ENCODE measurements at regions of chr11 and their contacts with region 1.

Region 1: DNA sequence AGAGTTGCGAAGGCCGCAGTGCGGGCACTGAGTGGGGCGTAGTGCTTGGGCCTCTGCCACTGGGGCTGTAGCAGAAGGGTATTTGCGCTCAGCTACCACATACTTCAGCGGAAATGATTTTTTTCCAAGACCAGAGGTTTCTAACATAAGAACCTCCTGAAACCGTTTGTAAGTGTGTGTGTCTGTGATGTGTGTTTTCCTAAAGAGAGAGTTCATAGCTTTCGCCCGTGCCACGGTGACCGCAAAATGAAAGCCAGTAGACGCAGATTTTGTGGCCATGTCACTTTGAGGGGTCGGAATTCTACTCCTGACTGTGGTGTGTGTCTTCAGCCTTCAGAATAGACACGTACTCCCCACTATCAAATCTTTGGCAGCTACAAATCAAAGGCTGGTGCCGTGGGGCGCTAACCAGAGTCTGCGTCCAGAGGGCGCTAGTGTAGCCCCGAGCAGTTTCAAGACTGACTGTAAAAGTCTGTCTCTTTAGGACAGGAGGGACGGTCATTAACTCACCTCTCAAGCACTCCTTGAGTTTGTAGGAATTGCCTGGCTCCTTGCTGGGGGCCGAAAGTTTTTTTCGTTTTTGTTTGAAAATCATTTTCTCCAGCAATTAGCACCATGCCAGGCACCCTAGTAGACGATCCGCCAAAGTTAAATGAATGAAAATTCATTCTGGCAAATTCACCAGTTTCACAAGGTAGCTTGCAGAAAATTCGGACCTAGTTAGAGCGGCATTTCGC is 2.5 kb upstream of the CALCA start:
- DNase-seq: no peak
- ATAC-seq: peak; percentile 80
- H3K4me3 ChIP-seq: no peak overlapping the region
- H3K27ac ChIP-seq: no peak overlapping the region
- H3K4me1 ChIP-seq: no peaks in the 10 kb centered on the region; the same call in 1 of the 2 replicates
- H3K27me3 ChIP-seq: peaks cover 6 to 16% of the 10 kb centered on the region in 2 experiments; a peak in 3 of 4 replicates
- CTCF ChIP-seq: peak; percentile 39 to 68 (median 65)
- EP300 ChIP-seq: no peak
- POLR2A ChIP-seq: no peak
- RAD21 ChIP-seq: peak; percentile 25; the same call in 1 of the 2 replicates

Region 2: GRCh38 chr11:13781148-13781547 is 1193.5 kb before region 1 on chr11:
- CTCF ChIA-PET with region 1: no interaction called
- POLR2A ChIA-PET with region 1: no interaction called
- RAD21 ChIA-PET with region 1: no interaction called
- SMC1A ChIA-PET with region 1: no interaction called
- in situ Hi-C with region 1: no loop called
- intact Hi-C with region 1: no loop called
- DNase-seq: no peak
- ATAC-seq: no peak
- H3K4me3 ChIP-seq: no peak overlapping the region
- H3K27ac ChIP-seq: no peak overlapping the region
- H3K4me1 ChIP-seq: no peaks in the 10 kb centered on the region
- H3K27me3 ChIP-seq: no peaks in the 10 kb centered on the region
- CTCF ChIP-seq: no peak
- EP300 ChIP-seq: no peak
- POLR2A ChIP-seq: no peak
- RAD21 ChIP-seq: no peak

Region 3: DNA sequence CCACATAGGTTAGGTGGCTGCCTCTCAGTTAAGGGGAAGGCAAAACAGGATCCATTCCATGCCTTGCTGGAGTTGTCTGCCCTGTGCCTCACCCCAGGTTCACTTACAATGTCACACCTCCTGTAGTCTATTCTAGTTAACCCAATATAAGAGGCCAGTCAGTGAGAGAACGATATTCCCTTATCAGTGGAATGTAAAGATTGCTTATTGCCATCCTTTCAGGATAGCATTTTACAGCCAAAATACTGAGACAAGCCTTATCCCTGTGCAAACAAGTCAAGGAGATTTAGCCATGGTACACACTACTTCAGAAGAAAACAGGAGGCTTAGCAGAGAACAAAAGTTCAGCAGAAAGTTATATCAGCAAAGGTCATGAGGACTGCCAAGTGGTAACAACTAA is 88.2 kb before region 1 on chr11:
- CTCF ChIA-PET with region 1: no interaction called
- POLR2A ChIA-PET with region 1: no interaction called
- RAD21 ChIA-PET with region 1: no interaction called
- SMC1A ChIA-PET with region 1: no interaction called
- in situ Hi-C with region 1: no loop called
- intact Hi-C with region 1: no loop called
- DNase-seq: no peak
- ATAC-seq: no peak
- H3K4me3 ChIP-seq: no peak overlapping the region
- H3K27ac ChIP-seq: no peak overlapping the region
- H3K4me1 ChIP-seq: peaks cover 4% of the 10 kb centered on the region; the same call in 1 of the 2 replicates
- H3K27me3 ChIP-seq: no peaks in the 10 kb centered on the region
- CTCF ChIP-seq: no peak
- EP300 ChIP-seq: no peak
- POLR2A ChIP-seq: no peak
- RAD21 ChIP-seq: no peak

Region 4: GRCh38 chr11:15006139-15006759 is 31.6 kb after region 1 on chr11:
- CTCF ChIA-PET with region 1: interaction called, 16 read pairs
- POLR2A ChIA-PET with region 1: no interaction called
- RAD21 ChIA-PET with region 1: interaction called, 3 read pairs
- SMC1A ChIA-PET with region 1: interaction called, 5 read pairs
- in situ Hi-C with region 1: no loop called
- intact Hi-C with region 1: loop called (anchors 1 kb)
- DNase-seq: peak; percentile 0
- ATAC-seq: peak; percentile 86
- H3K4me3 ChIP-seq: no peak overlapping the region
- H3K27ac ChIP-seq: no peak overlapping the region
- H3K4me1 ChIP-seq: no peaks in the 10 kb centered on the region
- H3K27me3 ChIP-seq: no peaks in the 10 kb centered on the region; a peak in 1 of 4 replicates
- CTCF ChIP-seq: peak; percentile 33 to 53 (median 50); a peak in 5 of 6 replicates
- EP300 ChIP-seq: no peak
- POLR2A ChIP-seq: no peak
- RAD21 ChIP-seq: peak; percentile 49

Region 5: DNA sequence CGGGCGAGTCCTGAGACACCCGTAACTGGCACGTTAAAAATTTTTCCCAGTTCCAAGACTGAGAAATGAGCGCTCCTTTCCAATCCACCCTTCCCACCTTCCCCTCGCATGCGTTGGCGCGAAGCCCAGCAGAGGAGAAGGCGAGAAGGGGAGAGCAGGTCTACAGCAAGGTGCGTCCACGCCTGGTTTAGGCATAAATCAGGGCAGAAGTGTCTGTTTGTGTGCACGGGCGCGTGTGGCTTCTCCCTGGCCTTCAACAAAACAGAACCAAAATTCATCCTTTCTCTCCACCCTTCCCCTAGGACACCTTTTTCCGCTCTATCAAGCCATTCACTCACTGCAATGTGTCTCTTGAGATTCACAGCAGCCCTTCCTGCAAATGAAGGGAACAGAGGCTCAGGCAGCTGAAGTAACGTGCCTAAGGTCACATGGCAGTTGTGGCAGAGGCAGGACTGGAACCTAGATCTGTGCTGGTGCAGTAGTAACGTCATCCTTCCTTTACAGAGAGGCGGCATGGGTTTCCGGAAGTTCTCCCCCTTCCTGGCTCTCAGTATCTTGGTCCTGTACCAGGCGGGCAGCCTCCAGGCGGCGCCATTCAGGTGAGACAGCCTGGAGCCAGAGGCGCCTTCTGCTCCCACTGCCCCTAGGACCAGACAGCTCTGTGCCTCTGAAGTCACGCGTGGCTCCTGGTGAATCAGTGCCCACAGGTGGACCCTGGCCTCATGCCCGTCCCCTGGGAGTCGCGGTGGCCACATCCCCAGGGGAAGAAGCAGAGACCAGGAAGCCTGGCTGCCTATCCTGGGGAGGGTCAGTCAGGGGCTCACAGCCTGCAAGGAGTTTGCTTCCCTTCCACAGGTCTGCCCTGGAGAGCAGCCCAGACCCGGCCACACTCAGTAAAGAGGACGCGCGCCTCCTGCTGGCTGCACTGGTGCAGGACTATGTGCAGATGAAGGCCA is 99.8 kb after region 1 on chr11:
- CTCF ChIA-PET with region 1: interaction called, 5 read pairs
- POLR2A ChIA-PET with region 1: no interaction called
- RAD21 ChIA-PET with region 1: no interaction called
- SMC1A ChIA-PET with region 1: no interaction called
- in situ Hi-C with region 1: no loop called
- intact Hi-C with region 1: loop called (anchors 2 kb)
- DNase-seq: no peak
- ATAC-seq: peak; percentile 99
- H3K4me3 ChIP-seq: no peak overlapping the region
- H3K27ac ChIP-seq: no peak overlapping the region
- H3K4me1 ChIP-seq: no peaks in the 10 kb centered on the region
- H3K27me3 ChIP-seq: 0 out of 4 replicates have a peak, but pooled peaks cover 0 to 2% of the 10 kb centered on the region in 2 experiments
- CTCF ChIP-seq: peak; percentile 67 to 88 (median 75)
- EP300 ChIP-seq: no peak
- POLR2A ChIP-seq: no peak
- RAD21 ChIP-seq: peak; percentile 65

Region 6: DNA sequence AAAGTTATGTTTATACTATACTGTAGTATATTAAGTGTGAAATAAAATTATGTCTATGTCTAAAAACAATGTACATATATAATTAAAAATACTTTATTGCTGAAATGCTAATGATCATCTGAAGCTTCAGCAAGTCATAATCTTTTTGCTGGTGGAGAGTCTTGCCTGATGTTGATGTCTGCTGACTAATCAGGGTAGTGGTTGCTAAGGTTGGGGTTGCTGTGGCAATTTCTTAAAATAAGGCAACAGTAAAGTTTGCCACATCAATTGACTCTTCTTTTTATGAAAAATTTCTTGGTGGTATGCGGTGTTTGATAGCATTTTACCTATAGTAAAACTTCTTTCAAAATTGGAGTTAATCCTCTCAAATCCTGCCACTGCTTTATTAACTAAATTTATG is 161.5 kb after region 1 on chr11:
- CTCF ChIA-PET with region 1: no interaction called
- POLR2A ChIA-PET with region 1: no interaction called
- RAD21 ChIA-PET with region 1: no interaction called
- SMC1A ChIA-PET with region 1: no interaction called
- in situ Hi-C with region 1: no loop called
- intact Hi-C with region 1: no loop called
- DNase-seq: no peak
- ATAC-seq: no peak
- H3K4me3 ChIP-seq: no peak overlapping the region
- H3K27ac ChIP-seq: no peak overlapping the region
- H3K4me1 ChIP-seq: no peaks in the 10 kb centered on the region
- H3K27me3 ChIP-seq: no peaks in the 10 kb centered on the region; a peak in 1 of 4 replicates
- CTCF ChIP-seq: no peak
- EP300 ChIP-seq: no peak
- POLR2A ChIP-seq: no peak
- RAD21 ChIP-seq: no peak

Region 7: GRCh38 chr11:15208378-15209222 is 233.9 kb after region 1 on chr11:
- CTCF ChIA-PET with region 1: interaction called, 5 read pairs
- POLR2A ChIA-PET with region 1: no interaction called
- RAD21 ChIA-PET with region 1: no interaction called
- SMC1A ChIA-PET with region 1: no interaction called
- in situ Hi-C with region 1: no loop called
- intact Hi-C with region 1: loop called (anchors 5 kb)
- DNase-seq: no peak
- ATAC-seq: peak; percentile 100
- H3K4me3 ChIP-seq: no peak overlapping the region
- H3K27ac ChIP-seq: no peak overlapping the region
- H3K4me1 ChIP-seq: no peaks in the 10 kb centered on the region
- H3K27me3 ChIP-seq: no peaks in the 10 kb centered on the region
- CTCF ChIP-seq: peak; percentile 84 to 97 (median 92)
- EP300 ChIP-seq: no peak
- POLR2A ChIP-seq: no peak
- RAD21 ChIP-seq: peak; percentile 92

Measured in GM12878 (cell line).